SK-N-SH (cell line): ENCODE measurements at regions of chr3 and their contacts with region 1.

Region 1: DNA sequence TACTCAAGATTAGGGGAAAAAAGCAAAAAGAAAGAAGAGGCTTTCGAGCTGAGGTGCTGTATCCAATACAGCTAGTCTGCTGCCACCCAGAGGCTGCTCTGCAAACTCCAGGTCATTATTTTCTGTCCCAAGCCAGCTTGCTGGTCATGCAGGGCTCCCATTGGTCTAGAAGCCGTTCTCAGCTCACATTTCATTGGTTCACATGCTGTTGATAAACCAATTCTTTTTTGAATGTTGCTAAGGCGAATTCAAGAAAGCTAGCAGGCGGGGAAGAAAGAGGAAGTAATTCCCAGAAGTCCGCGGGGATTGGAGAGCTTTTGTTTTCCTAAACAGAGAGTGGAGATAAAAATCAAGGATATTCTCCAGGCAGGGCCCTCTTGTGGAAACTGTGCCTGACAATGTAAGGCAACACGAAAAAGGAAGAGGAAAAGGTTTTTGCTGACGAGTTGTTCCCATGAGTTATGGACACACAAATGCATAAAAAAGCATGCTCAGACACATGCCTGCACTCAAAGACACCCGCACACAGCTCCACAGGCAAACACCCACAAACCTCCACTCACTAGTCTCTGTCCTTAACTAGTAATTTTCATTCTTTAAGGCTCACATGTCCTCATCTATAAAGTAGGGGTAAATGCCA is 33.4 kb downstream of the FSTL1 start:
- DNase-seq: peak; percentile 89
- H3K4me3 ChIP-seq: peak overlapping the region; percentile 34 to 46; a peak in 3 of 4 replicates
- H3K27ac ChIP-seq: peak overlapping the region; percentile 96 to 98
- H3K4me1 ChIP-seq: peaks cover 23 to 27% of the 10 kb centered on the region in 2 experiments
- H3K27me3 ChIP-seq: no peaks in the 10 kb centered on the region
- CTCF ChIP-seq: peak; percentile 93
- EP300 ChIP-seq: peak in 1 of 2 experiments; percentile 80; a peak in 2 of 4 replicates
- RAD21 ChIP-seq: peak; percentile 92

Region 2: GRCh38 chr3:120245386-120245785 is 172.0 kb before region 1 on chr3:
- CTCF ChIA-PET with region 1: interaction called, 109 read pairs
- POLR2A ChIA-PET with region 1: interaction called, 7 read pairs
- DNase-seq: no peak
- H3K4me3 ChIP-seq: no peak overlapping the region
- H3K27ac ChIP-seq: no peak overlapping the region
- H3K4me1 ChIP-seq: peaks cover 0 to 3% of the 10 kb centered on the region in 2 experiments; a peak in 1 of 4 replicates
- H3K27me3 ChIP-seq: no peaks in the 10 kb centered on the region
- CTCF ChIP-seq: no peak
- EP300 ChIP-seq: no peak
- RAD21 ChIP-seq: no peak

Region 3: DNA sequence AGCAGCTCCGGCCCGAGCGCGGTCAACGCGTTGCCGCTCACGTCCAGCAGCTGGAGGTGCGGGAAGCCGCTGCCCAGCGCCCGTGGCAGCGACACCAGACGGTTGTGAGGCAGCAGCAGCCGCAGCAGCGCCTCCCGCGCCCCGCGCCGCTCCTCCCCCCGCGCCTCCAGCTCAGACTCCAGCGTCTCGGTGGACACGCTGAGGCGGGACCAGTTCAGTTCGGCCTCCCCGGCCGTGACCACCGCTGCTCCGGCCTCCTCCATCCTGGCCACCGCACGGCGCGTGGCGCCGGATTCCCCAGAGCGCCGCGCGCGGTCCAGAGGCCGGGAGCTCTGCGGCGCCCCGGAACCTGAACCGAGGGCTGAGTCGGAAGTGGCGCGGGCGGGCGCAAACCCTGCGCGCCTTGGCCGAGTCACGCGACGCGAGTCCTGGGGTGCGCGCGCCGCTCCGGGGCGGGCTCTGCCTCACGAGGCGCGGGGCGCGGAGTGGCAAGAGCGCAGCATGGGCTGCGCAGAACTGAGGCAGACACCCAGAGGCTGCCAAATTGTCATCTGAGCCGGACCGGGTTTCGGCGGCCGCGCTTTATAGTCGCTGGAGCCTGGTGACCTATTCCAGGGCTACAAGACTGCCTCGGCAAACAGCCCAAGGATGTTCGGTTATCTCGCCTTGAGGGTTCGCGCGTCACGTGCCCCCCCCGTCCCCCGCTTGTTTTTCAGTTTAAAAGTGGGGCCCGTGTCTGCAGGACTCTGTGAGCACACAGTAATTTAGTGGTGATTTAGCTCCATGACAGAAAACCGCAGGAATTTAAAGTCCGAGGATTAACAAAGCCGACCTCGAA is 68.2 kb before region 1 on chr3 and contains the start of gene LRRC58:
- CTCF ChIA-PET with region 1: interaction called, 9 read pairs
- POLR2A ChIA-PET with region 1: interaction called, 11 read pairs
- DNase-seq: peak; percentile 95
- H3K4me3 ChIP-seq: peak within 1 kb of the TSS; percentile 90 to 94
- H3K27ac ChIP-seq: peak within 1 kb of the TSS; percentile 87 to 96
- H3K4me1 ChIP-seq: peaks cover 6 to 12% of the 10 kb centered on the region in 2 experiments; a peak in 3 of 4 replicates
- H3K27me3 ChIP-seq: no peaks in the 10 kb centered on the region
- CTCF ChIP-seq: peak; percentile 31
- EP300 ChIP-seq: peak; percentile 19 to 39; a peak in 2 of 4 replicates
- RAD21 ChIP-seq: no peak; the same call in 1 of the 2 replicates
- polyA plus RNA-seq, gene LRRC58: 5.8 and 8.1 TPM in 2 replicates

Region 4: DNA sequence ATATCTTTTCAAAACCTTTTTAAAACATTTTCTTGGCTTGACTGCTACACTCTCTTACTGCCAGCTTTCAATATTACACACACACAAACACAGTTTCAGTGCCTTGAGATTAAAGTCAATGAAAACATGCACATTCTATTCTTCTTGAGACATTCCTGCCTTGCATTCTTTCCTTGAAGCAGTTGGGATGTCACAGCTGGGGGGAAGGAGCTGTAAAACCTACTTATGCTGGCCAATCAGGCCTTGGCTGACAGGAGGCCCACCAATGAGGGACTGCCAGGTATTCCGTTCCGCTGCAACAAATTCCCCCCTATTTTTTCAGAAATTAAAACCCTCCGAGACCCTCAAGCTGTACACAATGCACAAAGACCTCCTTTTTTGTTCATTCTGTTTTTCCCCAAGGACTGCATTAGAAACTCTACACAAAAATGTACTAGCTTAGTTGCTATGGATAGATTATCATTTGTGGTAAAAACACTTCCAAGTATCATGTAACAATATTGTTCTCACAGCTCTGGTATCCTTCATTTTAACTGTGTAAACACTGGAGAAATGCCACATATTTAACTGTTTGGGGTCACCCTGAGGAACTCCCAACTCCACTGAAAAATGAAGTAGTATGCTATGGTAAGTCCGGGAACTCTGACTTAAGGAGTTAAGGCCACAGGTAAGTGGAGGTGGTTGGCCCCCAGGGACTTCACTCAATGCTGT is 14.9 kb after region 1 on chr3:
- CTCF ChIA-PET with region 1: interaction called, 17 read pairs
- POLR2A ChIA-PET with region 1: no interaction called
- DNase-seq: no peak
- H3K4me3 ChIP-seq: no peak overlapping the region
- H3K27ac ChIP-seq: peak overlapping the region; percentile 54 to 96; a peak in 3 of 4 replicates
- H3K4me1 ChIP-seq: peaks cover 4 to 83% of the 10 kb centered on the region in 2 experiments
- H3K27me3 ChIP-seq: no peaks in the 10 kb centered on the region
- CTCF ChIP-seq: no peak
- EP300 ChIP-seq: no peak
- RAD21 ChIP-seq: no peak

Region 5: DNA sequence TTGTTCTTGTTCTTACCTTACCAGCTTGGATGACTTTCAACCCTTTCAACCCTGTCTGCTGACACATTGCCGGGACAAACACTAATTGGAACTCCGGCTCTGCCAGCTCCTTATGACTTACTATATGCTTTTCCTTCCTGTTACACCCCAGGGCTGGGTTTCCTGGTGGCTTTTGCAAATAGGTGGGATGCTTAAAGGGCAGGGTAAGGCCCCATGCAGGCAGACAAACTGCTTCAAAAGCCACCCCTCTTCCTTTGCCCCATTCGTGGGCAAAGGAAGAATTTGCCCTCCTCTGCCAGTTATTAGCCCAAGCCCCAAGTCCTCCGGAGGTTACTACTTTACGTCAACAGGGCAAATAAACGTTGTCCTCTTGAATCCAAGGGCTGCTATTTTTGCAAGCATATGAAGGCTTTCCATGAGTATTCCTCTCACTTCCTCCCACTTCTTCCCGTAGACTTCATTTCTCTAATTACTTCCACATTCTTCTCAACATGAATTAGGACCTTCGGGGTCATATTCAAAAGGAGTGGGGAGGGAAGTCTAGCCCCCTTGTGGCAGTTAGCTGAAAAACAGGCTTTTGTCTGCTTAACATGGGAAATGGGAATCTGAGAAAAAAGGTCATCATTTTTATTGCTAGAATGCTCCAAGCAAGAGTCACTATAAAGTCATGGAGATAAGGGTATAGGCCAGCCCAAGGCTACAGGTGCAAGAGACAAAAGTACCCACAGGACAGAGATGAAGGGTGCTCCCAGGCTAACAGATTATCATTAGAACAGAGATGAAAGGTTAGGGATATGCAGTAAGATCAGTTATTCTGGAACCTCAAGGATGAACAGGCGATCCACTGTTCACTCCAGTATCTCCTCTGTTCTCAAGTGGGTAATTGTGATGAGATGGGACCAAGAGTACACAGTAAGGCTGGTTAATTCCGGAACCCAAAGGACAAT is 89.7 kb after region 1 on chr3:
- CTCF ChIA-PET with region 1: interaction called, 29 read pairs
- POLR2A ChIA-PET with region 1: no interaction called
- DNase-seq: peak; percentile 34
- H3K4me3 ChIP-seq: no peak overlapping the region
- H3K27ac ChIP-seq: no peak overlapping the region
- H3K4me1 ChIP-seq: peaks cover 0 to 10% of the 10 kb centered on the region in 2 experiments; a peak in 2 of 4 replicates
- H3K27me3 ChIP-seq: no peaks in the 10 kb centered on the region
- CTCF ChIP-seq: peak; percentile 76
- EP300 ChIP-seq: no peak
- RAD21 ChIP-seq: peak; percentile 61

Region 6: DNA sequence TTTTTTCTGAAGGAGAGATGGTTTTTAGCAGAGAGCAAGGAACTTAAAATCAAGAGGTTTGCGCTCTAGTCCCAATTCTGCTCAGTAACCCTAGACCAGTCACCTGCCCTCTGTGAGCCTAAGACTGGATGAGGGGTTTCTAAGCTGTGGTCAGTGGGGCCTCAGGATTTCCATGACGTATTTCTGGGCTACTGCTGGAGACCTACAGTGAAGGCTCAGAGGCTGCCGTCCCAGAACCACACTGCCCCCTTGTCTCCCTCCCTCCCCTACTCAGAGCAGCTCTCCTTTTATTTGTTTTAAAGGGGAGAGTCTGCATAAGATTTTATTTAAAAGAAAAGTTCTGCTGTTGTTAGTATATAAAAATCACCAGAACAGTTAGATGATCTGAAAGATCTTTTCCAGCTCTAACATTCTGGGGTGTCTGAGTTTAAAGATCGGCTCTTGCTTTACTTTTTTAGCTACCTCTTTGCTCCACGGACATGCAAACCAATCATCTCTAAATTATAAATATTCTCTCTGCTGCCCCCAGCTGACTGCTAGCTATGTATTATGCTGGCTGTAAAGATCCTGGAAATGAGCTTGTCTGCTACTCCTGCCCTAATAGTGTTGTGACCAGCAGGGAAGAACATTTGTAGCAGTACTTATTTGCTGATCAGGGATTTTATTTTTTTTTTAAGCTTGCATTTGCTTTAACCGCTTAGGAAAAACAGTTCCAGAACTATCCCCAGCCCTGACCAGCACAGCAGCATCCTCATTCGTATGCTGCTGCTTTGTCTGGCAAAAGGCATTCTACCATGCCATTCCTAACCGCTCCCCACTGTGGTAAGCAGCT is 150.2 kb after region 1 on chr3:
- CTCF ChIA-PET with region 1: interaction called, 23 read pairs
- POLR2A ChIA-PET with region 1: no interaction called
- DNase-seq: peak; percentile 63
- H3K4me3 ChIP-seq: peak overlapping the region; percentile 35 to 43; a peak in 3 of 4 replicates
- H3K27ac ChIP-seq: peak overlapping the region in 1 of 2 experiments; percentile 74; a peak in 3 of 4 replicates
- H3K4me1 ChIP-seq: peaks cover 5 to 25% of the 10 kb centered on the region in 2 experiments; a peak in 3 of 4 replicates
- H3K27me3 ChIP-seq: no peaks in the 10 kb centered on the region
- CTCF ChIP-seq: peak; percentile 63
- EP300 ChIP-seq: no peak
- RAD21 ChIP-seq: peak; percentile 46

Region 7: DNA sequence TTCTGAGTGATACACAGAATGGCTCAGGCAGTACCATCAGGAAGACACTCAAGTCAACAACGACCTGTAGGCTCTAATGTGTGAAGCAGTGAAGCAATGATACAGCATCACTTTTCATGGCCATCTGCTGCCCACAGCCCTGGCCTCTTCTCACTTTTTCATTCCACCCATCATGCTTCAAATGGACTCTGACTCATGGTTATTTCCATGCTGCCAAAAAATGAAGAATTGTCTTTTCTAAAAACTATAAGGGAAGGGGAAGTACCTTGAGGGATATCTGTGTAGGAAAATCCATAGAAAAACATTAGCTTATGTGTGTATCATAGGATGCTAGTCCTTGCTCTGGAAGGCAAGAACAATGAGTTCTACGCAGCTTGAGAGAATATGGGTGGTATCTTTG is 253.2 kb after region 1 on chr3:
- CTCF ChIA-PET with region 1: no interaction called
- POLR2A ChIA-PET with region 1: no interaction called
- DNase-seq: no peak
- H3K4me3 ChIP-seq: no peak overlapping the region
- H3K27ac ChIP-seq: no peak overlapping the region
- H3K4me1 ChIP-seq: no peaks in the 10 kb centered on the region; a peak in 1 of 4 replicates
- H3K27me3 ChIP-seq: no peaks in the 10 kb centered on the region
- CTCF ChIP-seq: no peak
- EP300 ChIP-seq: no peak
- RAD21 ChIP-seq: no peak